Tibial artery (tissue), 4 donors: ENCODE measurements at regions of chr12 and their contacts with region 1.

Region 1: GRCh38 chr12:50187084-50187900 is 20.1 kb upstream of the CERS5 start:
- DNase-seq: no peak
- H3K4me3 ChIP-seq: no peak overlapping the region
- H3K27ac ChIP-seq: peak overlapping the region; percentile 70 to 72
- H3K4me1 ChIP-seq: peaks cover 0 to 61% (median 39%) of the 10 kb centered on the region in 4 donors
- H3K27me3 ChIP-seq: no peaks in the 10 kb centered on the region
- CTCF ChIP-seq: no peak

Region 2: GRCh38 chr12:50314629-50315312 is 127.5 kb after region 1 on chr12:
- intact Hi-C with region 1: loop called (anchors 10 kb)
- DNase-seq: no peak
- H3K4me3 ChIP-seq: no peak overlapping the region
- H3K27ac ChIP-seq: no peak overlapping the region
- H3K4me1 ChIP-seq: peaks cover 0 to 4% (median 0%) of the 10 kb centered on the region in 4 donors
- H3K27me3 ChIP-seq: no peaks in the 10 kb centered on the region
- CTCF ChIP-seq: peak; percentile 50 to 65